ENCODE measurements at regions of chr2 and their contacts with region 1.

Region 1: GRCh38 chr2:181904022-181904632 is 12.6 kb downstream of the ITPRID2 start:
- DNase-seq: peak; percentile 89
- H3K4me3 ChIP-seq: peak overlapping the region in 1 of 3 experiments; percentile 23
- H3K27ac ChIP-seq: peak overlapping the region; percentile 29
- H3K4me1 ChIP-seq: peaks cover 48% of the 10 kb centered on the region
- H3K27me3 ChIP-seq: no peaks in the 10 kb centered on the region
- CTCF ChIP-seq: peak; percentile 40 to 50
- POLR2A ChIP-seq: no peak

Region 2: GRCh38 chr2:181573140-181573736 is 330.9 kb before region 1 on chr2:
- CTCF ChIA-PET with region 1: interaction called, 5 read pairs
- POLR2A ChIA-PET with region 1: no interaction called
- dilution Hi-C with region 1: no loop called
- intact Hi-C with region 1: loop called (anchors 5 kb)
- DNase-seq: peak; percentile 38
- H3K4me3 ChIP-seq: no peak overlapping the region
- H3K27ac ChIP-seq: no peak overlapping the region
- H3K4me1 ChIP-seq: no peaks in the 10 kb centered on the region
- H3K27me3 ChIP-seq: peaks cover 4 to 12% of the 10 kb centered on the region in 2 experiments
- CTCF ChIP-seq: peak; percentile 18 to 31
- POLR2A ChIP-seq: no peak

Region 3: GRCh38 chr2:181774685-181775084 is 129.4 kb before region 1 on chr2:
- CTCF ChIA-PET with region 1: interaction called, 6 read pairs
- POLR2A ChIA-PET with region 1: interaction called, 3 read pairs
- dilution Hi-C with region 1: loop called (anchors 25 kb)
- intact Hi-C with region 1: no loop called
- DNase-seq: no peak
- H3K4me3 ChIP-seq: no peak overlapping the region
- H3K27ac ChIP-seq: no peak overlapping the region
- H3K4me1 ChIP-seq: peaks cover 30% of the 10 kb centered on the region
- H3K27me3 ChIP-seq: no peaks in the 10 kb centered on the region
- CTCF ChIP-seq: no peak
- POLR2A ChIP-seq: no peak

Region 4: GRCh38 chr2:181850936-181851560 is 53.1 kb before region 1 on chr2:
- CTCF ChIA-PET with region 1: no interaction called
- POLR2A ChIA-PET with region 1: no interaction called
- dilution Hi-C with region 1: no loop called
- intact Hi-C with region 1: no loop called
- DNase-seq: peak; percentile 42
- H3K4me3 ChIP-seq: no peak overlapping the region
- H3K27ac ChIP-seq: no peak overlapping the region
- H3K4me1 ChIP-seq: peaks cover 4% of the 10 kb centered on the region
- H3K27me3 ChIP-seq: no peaks in the 10 kb centered on the region
- CTCF ChIP-seq: no peak
- POLR2A ChIP-seq: no peak

Region 5: DNA sequence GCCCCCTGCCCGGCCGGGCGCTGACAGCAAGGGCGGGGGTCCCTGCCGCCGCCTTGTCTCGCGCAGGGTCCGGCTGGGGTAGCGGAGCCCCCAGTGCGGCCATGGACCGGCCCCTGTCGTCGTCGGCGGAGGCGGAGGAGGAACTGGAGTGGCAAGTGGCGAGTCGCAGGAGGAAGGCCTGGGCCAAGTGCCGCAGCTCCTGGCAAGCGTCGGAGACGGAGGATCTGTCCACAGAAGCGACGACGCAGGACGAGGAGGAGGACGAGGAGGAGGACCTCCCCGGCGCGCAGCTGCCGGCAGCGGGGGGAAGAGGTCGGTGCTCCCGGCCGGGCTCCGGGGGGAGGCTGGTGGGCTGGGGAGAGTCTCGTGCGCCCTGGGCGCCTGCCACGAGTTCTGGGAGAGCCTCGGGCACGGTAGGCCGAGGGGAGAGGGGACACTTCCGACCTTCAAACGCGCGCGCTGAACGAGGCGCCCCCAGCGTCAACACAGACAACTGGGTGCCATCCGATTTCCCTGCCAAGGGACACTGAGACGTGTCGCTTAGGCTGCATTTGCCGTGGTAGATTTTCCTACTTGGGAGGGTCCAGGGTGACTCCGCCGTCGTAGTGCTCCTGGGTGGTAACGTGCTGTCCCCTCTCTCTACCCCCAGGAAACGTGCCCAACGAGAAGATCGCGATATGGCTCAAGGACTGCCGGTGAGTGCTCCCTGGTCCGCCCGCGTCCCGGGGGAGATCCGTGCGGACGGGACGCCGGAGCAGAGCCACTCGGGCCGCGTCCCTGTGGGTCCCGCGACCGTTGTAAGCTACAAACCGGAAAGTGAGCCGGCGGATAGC is 11.9 kb before region 1 on chr2:
- CTCF ChIA-PET with region 1: interaction called, 20 read pairs
- POLR2A ChIA-PET with region 1: interaction called, 3 read pairs
- dilution Hi-C with region 1: no loop called
- intact Hi-C with region 1: no loop called
- DNase-seq: peak; percentile 82
- H3K4me3 ChIP-seq: peak overlapping the region; percentile 80 to 95 (median 92)
- H3K27ac ChIP-seq: peak overlapping the region; percentile 80
- H3K4me1 ChIP-seq: peaks cover 42% of the 10 kb centered on the region
- H3K27me3 ChIP-seq: no peaks in the 10 kb centered on the region
- CTCF ChIP-seq: peak in 1 of 2 donors; percentile 2
- POLR2A ChIP-seq: peak; percentile 35

Region 6: DNA sequence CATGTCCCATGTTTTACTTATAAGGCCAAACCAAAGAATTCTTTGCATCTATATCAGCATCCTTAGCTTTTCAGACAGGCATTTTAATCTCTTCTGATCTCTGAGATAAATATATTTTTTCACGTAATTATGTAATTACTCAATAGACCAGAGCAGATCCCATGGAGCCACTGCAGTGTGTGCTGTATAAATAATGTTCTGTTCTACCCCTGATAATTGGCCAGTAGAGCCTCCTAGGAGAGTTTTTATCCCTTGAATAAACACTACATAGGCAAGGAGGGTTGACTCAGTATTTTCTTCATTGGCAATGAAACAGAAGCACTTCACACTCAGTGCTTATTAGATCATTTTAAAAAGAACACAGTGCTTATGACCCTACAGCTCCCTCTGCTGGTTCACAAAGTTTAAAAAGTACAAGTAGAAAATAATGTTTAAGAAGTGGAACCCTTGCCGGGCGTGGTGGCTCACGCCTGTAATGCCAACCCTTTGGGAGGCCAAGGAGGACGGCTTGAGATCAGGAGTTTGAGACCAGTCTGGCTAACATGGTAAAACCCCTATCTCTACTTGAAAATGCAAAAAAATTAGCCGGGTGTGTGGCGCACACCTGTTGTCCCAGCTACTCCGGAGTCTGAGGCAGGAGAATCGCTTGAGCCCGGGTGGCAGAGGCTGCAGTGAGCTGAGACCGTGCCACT is 173.5 kb after region 1 on chr2:
- CTCF ChIA-PET with region 1: interaction called, 44 read pairs
- POLR2A ChIA-PET with region 1: no interaction called
- dilution Hi-C with region 1: no loop called
- intact Hi-C with region 1: loop called (anchors 1 kb)
- DNase-seq: peak; percentile 84
- H3K4me3 ChIP-seq: no peak overlapping the region
- H3K27ac ChIP-seq: no peak overlapping the region
- H3K4me1 ChIP-seq: peaks cover 3% of the 10 kb centered on the region
- H3K27me3 ChIP-seq: no peaks in the 10 kb centered on the region
- CTCF ChIP-seq: peak; percentile 40 to 45
- POLR2A ChIP-seq: no peak

Measured in endothelial cell of umbilical vein (primary cell).